ENCODE measurements at regions of chr19 and their contacts with region 1.

Region 1: DNA sequence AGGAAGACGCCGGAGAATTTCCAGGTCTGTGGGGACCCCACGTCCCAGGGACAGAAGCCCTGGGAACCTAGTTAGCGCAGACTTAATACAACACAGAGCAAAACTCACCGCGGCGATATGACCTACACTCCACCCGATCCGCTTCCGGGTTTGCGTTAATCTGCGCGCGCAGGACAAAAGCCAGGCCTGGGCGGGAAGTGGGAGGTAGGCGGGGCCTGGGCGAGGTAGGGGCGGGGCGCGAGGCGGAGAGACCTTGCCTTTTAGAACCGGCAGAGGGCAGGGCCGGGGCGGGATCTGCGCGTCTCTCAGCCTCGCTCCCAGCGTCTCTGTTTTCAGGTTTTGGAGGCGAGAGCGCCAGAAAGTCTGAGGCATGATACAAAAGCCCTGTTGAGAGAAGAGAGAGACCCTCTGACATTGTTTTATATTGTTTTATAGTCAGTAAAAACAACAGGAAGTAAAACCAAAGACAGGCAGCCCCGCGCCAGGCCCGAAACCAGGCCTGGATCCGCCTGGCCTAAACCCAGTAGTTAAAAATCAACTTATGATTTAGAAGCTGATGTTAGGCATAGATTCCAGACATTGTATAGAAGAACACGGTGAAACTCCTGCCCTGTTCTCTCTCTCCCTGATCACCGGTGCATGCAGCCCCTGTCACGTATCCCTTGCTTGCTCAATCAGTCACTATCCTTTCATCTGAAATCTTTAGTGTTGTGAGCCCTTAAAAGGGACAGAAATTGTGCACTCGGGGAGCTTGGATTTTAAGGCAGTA is at the start of gene ZNF611:
- DNase-seq: peak; percentile 100
- H3K4me3 ChIP-seq: peak within 1 kb of the TSS; percentile 64 to 83 (median 74)
- H3K27ac ChIP-seq: peak within 1 kb of the TSS; percentile 74 to 92 (median 86)
- H3K4me1 ChIP-seq: peaks cover 22 to 31% (median 28%) of the 10 kb centered on the region in 4 donors
- H3K27me3 ChIP-seq: no peaks in the 10 kb centered on the region
- CTCF ChIP-seq: peak; percentile 52 to 70 (median 67)
- EP300 ChIP-seq: no peak
- POLR2A ChIP-seq: peak; percentile 63
- total RNA-seq, gene ZNF611: 7.3 to 9.6 (median 7.6) TPM

Region 2: DNA sequence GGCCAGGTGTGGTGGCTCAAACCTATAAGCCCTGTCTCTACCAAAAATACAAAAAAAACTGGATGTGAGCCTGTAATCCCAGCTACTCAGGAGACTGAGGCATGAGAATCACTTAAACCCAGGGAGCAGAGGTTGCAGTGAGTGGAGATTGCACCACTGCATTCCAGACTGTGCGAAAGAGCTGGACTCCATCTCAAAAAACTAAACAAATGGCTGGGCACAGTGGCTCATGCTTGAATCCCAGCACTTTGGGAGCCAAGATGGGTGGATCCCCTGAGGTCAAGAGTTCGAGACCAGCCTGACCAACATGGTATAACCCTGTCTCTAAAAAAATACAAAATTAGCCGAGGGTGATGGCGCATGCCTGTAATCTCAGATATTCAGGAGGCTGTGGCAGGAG is 62.1 kb before region 1 on chr19:
- intact Hi-C with region 1: no loop called
- DNase-seq: no peak
- H3K4me3 ChIP-seq: no peak overlapping the region
- H3K27ac ChIP-seq: no peak overlapping the region
- H3K4me1 ChIP-seq: peaks cover 0 to 4% (median 0%) of the 10 kb centered on the region in 4 donors
- H3K27me3 ChIP-seq: no peaks in the 10 kb centered on the region
- CTCF ChIP-seq: no peak
- EP300 ChIP-seq: no peak
- POLR2A ChIP-seq: no peak

Region 3: DNA sequence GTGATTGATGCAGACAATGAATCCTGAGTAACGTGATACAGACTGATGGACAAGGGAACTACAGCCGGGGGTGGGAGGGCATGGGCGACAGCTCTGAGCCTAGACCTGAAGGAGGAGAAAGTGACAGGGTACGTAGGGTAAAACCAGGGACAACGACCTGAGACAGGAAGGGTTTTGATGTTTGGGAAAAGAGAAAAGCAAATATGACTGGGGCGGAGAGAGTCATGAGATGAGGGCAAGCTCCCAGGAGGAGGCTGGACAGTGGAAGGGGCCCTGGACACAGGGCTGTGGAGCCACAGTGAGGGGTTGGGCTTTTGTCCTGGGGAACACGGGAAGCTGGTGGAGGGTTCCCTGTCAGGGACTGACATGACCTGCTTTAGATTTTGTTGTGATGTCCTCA is 34.4 kb before region 1 on chr19:
- intact Hi-C with region 1: no loop called
- DNase-seq: no peak
- H3K4me3 ChIP-seq: no peak overlapping the region
- H3K27ac ChIP-seq: no peak overlapping the region
- H3K4me1 ChIP-seq: no peaks in the 10 kb centered on the region
- H3K27me3 ChIP-seq: no peaks in the 10 kb centered on the region
- CTCF ChIP-seq: no peak
- EP300 ChIP-seq: no peak
- POLR2A ChIP-seq: no peak

Region 4: GRCh38 chr19:52786457-52787359 is 51.6 kb after region 1 on chr19 and contains the start of gene ZNF600:
- intact Hi-C with region 1: loop called (anchors 5 kb)
- DNase-seq: peak; percentile 97
- H3K4me3 ChIP-seq: peak within 1 kb of the TSS; percentile 64 to 72 (median 66)
- H3K27ac ChIP-seq: peak within 1 kb of the TSS; percentile 64 to 88 (median 78)
- H3K4me1 ChIP-seq: peaks cover 6 to 19% (median 16%) of the 10 kb centered on the region in 4 donors
- H3K27me3 ChIP-seq: no peaks in the 10 kb centered on the region
- CTCF ChIP-seq: peak in 2 of 3 experiments; percentile 38 to 45
- EP300 ChIP-seq: no peak
- POLR2A ChIP-seq: no peak
- total RNA-seq, gene ZNF600: 4.8 to 15.0 (median 5.5) TPM

Region 5: DNA sequence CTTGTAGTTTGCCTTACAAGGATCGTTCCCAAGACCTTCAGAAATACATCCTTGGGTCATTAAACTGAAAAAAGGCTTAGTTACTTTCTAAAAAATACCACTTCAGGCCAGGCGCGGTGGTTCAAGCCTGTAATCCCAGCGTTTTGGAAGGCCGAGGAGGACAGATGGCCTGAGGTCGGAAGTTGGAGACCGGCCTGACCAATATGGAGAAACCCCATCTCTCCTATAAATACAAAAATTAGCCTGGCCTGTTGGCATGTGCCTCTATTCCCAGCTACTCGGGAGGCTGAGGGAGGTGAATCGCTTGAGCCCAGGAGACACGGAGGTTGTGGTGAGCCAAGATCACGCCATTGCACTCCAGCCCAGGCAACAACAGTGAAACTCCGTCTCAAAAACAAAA is 88.6 kb after region 1 on chr19:
- intact Hi-C with region 1: no loop called
- DNase-seq: no peak
- H3K4me3 ChIP-seq: no peak overlapping the region
- H3K27ac ChIP-seq: no peak overlapping the region
- H3K4me1 ChIP-seq: peaks cover 0 to 9% (median 6%) of the 10 kb centered on the region in 4 donors
- H3K27me3 ChIP-seq: no peaks in the 10 kb centered on the region
- CTCF ChIP-seq: no peak
- EP300 ChIP-seq: no peak
- POLR2A ChIP-seq: no peak

Measured in esophagus muscularis mucosa (tissue), 4 donors.